Activated naive CD8-positive, alpha-beta T cell treated with anti-CD3 and anti-CD28 coated beads, Interleukin-2, amount 10 ng/mL, durations not matched to agents 7 days and 5 days (primary cell): ENCODE measurements at regions of chr10 and their contacts with region 1.

Region 1: GRCh38 chr10:33125522-33126517 is 167.8 kb upstream of the ITGB1 start:
- DNase-seq: no peak
- ATAC-seq: peak; percentile 96
- H3K4me3 Mint-ChIP-seq: peak overlapping the region; percentile 47
- H3K27ac Mint-ChIP-seq: peak overlapping the region; percentile 88
- H3K4me1 Mint-ChIP-seq: peaks cover 18% of the 10 kb centered on the region
- H3K27me3 Mint-ChIP-seq: no peaks in the 10 kb centered on the region

Region 2: DNA sequence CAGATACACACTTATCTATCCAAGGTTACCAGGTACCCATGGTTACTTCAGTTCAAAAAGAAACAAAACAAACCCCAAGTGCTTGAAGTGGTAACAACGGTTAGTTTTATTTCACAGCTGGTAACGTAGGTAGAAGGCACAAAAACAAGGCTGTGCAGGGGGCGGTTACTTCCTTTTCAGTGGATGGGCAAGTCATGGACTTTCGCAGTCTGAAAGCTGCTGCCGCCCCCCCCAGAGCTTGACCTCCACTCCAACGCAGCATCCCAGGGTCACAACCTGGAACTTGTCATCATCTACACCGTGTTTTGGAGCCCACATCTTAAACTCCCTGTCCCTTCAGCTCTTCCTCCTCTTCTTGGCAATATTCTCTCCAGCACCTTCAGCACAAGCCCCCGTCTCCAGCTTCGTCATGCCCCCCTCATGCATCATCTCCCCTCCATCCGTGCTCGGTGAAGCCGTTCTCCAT is 13.4 kb after region 1 on chr10:
- POLR2A ChIA-PET with region 1: interaction called, 19 read pairs
- DNase-seq: peak; percentile 61
- ATAC-seq: peak; percentile 82
- H3K4me3 Mint-ChIP-seq: peak overlapping the region; percentile 69
- H3K27ac Mint-ChIP-seq: peak overlapping the region; percentile 92
- H3K4me1 Mint-ChIP-seq: peaks cover 49% of the 10 kb centered on the region
- H3K27me3 Mint-ChIP-seq: no peaks in the 10 kb centered on the region